ENCODE measurements at regions of chr4 and their contacts with region 1.

Region 1: DNA sequence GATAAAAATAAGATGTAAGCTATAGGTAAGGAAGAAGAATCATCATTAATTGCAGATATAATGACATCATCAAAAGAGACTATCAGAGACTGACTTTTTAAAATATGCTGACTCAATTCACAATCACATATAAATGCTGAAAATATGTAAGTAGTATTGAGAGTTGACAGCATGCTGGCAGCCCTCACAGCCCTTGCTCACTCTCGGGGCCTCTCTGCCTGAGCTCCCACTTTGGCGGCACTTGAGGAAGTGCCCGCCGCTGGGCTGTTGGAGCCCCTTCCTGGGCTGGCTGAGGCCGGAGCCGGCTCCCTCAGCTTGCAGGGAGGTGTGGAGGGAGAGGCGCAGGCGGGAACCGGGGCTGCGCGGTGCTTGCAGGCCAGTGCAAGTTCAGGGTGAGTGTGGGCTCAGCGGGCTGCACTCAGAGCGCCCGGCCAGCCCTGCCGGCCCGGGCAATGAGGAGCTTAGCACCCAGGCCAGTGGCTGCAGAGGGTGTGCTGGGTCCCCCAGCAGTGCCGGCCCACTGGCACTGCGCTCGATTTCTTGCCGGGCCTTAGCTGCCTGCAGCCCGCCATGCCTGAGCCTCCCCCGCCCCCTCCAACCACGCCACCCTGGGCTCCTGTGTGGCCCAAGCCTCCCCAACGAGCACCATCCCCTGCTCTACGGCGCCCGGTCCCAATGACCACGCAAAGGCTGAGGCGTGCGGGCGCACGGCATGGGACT is 68.9 kb downstream of the RAB28 start:
- DNase-seq: no peak
- ATAC-seq: no peak
- H3K4me3 ChIP-seq: no peak overlapping the region
- H3K4me3 Mint-ChIP-seq: no peak overlapping the region
- H3K27ac ChIP-seq: no peak overlapping the region
- H3K27ac Mint-ChIP-seq: no peak overlapping the region
- H3K4me1 ChIP-seq: no peaks in the 10 kb centered on the region
- H3K4me1 Mint-ChIP-seq: peaks cover 5 to 56% (median 41%) of the 10 kb centered on the region in 7 donors
- H3K27me3 ChIP-seq: no peaks in the 10 kb centered on the region
- H3K27me3 Mint-ChIP-seq: no peaks in the 10 kb centered on the region

Region 2: GRCh38 chr4:13371048-13371447 is 44.2 kb before region 1 on chr4:
- CTCF ChIA-PET with region 1: no interaction called
- POLR2A ChIA-PET with region 1: no interaction called
- intact Hi-C with region 1: loop called in 1 of 2 experiments (anchors 5 kb)
- DNase-seq: no peak
- ATAC-seq: no peak
- H3K4me3 ChIP-seq: no peak overlapping the region
- H3K4me3 Mint-ChIP-seq: no peak overlapping the region
- H3K27ac ChIP-seq: no peak overlapping the region
- H3K27ac Mint-ChIP-seq: no peak overlapping the region
- H3K4me1 ChIP-seq: no peaks in the 10 kb centered on the region
- H3K4me1 Mint-ChIP-seq: peaks cover 0 to 2% (median 0%) of the 10 kb centered on the region in 7 donors
- H3K27me3 ChIP-seq: no peaks in the 10 kb centered on the region
- H3K27me3 Mint-ChIP-seq: no peaks in the 10 kb centered on the region

Region 3: DNA sequence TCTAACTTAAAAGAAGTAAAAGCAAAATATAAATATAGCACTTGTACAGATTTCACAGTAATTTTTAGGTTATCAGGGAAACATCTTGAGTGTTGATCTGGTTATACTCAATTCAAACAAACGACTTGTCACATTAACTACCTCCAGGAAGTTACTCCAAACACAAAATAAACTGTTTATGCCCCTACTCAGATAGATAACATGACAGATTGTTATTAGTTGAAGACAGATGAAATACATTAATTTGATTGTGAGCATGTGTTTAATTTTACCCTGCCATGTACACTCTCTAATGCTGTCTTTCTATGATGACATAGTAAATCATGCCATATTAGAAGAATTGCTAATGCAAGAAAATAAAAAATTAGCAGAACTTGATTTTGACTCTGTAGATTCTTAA is 19.1 kb before region 1 on chr4:
- CTCF ChIA-PET with region 1: no interaction called
- POLR2A ChIA-PET with region 1: no interaction called
- intact Hi-C with region 1: loop called in 1 of 2 experiments (anchors 2 kb)
- DNase-seq: no peak
- ATAC-seq: no peak
- H3K4me3 ChIP-seq: no peak overlapping the region
- H3K4me3 Mint-ChIP-seq: no peak overlapping the region
- H3K27ac ChIP-seq: no peak overlapping the region
- H3K27ac Mint-ChIP-seq: no peak overlapping the region
- H3K4me1 ChIP-seq: no peaks in the 10 kb centered on the region
- H3K4me1 Mint-ChIP-seq: peaks cover 0 to 8% (median 3%) of the 10 kb centered on the region in 7 donors
- H3K27me3 ChIP-seq: no peaks in the 10 kb centered on the region
- H3K27me3 Mint-ChIP-seq: no peaks in the 10 kb centered on the region

Region 4: DNA sequence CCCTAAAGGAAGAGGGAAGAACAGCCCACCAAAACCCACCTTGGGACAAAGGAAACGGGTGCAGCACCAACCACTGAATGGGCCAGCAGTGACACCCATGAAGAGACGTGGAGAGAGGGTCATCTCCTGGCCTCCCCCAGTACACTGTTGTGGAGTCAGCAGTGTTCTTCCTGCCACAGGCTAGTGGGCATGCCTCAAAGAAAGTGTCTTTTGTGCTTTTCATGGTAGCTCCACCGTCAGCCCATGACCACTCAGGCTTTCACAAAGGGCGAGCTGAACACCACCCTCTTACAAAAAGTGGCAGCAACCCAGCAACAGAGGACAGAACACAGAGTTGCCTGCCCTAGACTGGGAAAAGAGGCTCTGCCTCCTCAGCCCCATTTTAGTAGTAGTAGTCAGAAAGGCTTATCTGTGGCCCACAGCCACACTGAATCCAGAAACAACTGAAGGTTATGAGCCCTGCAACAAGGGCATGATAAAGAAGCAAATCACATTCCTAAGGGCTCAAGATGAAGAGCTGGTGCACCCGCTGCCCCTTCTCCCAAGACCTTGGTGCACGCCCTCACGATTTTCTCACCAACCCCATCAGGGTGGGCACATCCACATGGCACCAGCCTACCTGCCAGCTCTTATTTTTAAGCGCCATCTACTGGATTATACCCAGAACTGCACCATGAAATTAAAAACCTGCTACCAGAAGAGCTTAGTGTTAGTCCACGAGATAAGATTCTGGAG is 15.8 kb after region 1 on chr4:
- CTCF ChIA-PET with region 1: no interaction called
- POLR2A ChIA-PET with region 1: no interaction called
- intact Hi-C with region 1: no loop called
- DNase-seq: no peak
- ATAC-seq: no peak
- H3K4me3 ChIP-seq: no peak overlapping the region
- H3K4me3 Mint-ChIP-seq: no peak overlapping the region
- H3K27ac ChIP-seq: no peak overlapping the region
- H3K27ac Mint-ChIP-seq: no peak overlapping the region
- H3K4me1 ChIP-seq: no peaks in the 10 kb centered on the region
- H3K4me1 Mint-ChIP-seq: peaks cover 9 to 67% (median 47%) of the 10 kb centered on the region in 7 donors
- H3K27me3 ChIP-seq: no peaks in the 10 kb centered on the region
- H3K27me3 Mint-ChIP-seq: no peaks in the 10 kb centered on the region

Region 5: GRCh38 chr4:14621731-14622463 is 1206.7 kb after region 1 on chr4:
- CTCF ChIA-PET with region 1: no interaction called
- POLR2A ChIA-PET with region 1: no interaction called
- intact Hi-C with region 1: no loop called
- DNase-seq: no peak
- ATAC-seq: no peak
- H3K4me3 ChIP-seq: no peak overlapping the region
- H3K4me3 Mint-ChIP-seq: no peak overlapping the region
- H3K27ac ChIP-seq: no peak overlapping the region
- H3K27ac Mint-ChIP-seq: no peak overlapping the region
- H3K4me1 ChIP-seq: no peaks in the 10 kb centered on the region
- H3K4me1 Mint-ChIP-seq: no peaks in the 10 kb centered on the region
- H3K27me3 ChIP-seq: no peaks in the 10 kb centered on the region
- H3K27me3 Mint-ChIP-seq: peaks cover 0 to under 1% (median 0%) of the 10 kb centered on the region in 5 donors

Region 6: DNA sequence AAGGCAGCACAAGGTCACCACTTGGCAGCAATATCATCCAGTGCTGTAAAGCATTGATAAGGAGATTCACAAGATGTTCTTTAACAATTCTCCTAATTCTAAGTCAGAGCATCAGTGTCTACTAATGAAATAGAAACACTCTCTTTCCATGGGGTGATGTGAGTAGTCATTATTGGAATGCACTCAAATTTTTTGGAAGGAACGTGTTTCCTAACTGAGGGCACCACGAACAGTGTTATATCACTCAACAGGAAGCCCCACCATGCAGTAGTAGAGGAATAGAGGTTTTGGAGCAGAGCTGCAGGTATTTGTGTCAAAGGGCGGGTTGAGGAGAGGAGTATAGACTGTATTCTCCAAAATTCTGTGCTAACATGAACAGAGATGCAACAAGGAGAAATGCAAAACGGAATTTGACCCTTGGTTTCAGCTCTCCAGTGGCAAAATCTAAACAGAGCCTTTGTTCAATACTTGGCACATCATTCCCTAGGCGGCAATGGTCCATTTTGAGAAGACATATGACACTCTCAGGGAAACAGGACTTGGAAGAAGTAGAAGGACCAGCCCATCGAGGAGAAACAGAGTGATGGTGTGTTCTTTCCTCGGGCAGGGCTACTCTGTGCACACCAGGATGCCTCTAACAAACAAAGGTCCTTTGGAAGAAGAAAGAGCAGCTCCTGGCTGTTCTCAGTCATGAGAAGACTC is 1685.9 kb after region 1 on chr4:
- CTCF ChIA-PET with region 1: no interaction called
- POLR2A ChIA-PET with region 1: no interaction called
- intact Hi-C with region 1: no loop called
- DNase-seq: no peak
- ATAC-seq: no peak
- H3K4me3 ChIP-seq: no peak overlapping the region
- H3K4me3 Mint-ChIP-seq: no peak overlapping the region
- H3K27ac ChIP-seq: no peak overlapping the region
- H3K27ac Mint-ChIP-seq: no peak overlapping the region
- H3K4me1 ChIP-seq: no peaks in the 10 kb centered on the region
- H3K4me1 Mint-ChIP-seq: no peaks in the 10 kb centered on the region
- H3K27me3 ChIP-seq: no peaks in the 10 kb centered on the region
- H3K27me3 Mint-ChIP-seq: peaks cover 0 to 18% (median 9%) of the 10 kb centered on the region in 5 donors

Measured in naive thymus-derived CD4-positive, alpha-beta T cell (primary cell).